ENCODE measurements at regions of chr18 and their contacts with region 1.

Region 1: DNA sequence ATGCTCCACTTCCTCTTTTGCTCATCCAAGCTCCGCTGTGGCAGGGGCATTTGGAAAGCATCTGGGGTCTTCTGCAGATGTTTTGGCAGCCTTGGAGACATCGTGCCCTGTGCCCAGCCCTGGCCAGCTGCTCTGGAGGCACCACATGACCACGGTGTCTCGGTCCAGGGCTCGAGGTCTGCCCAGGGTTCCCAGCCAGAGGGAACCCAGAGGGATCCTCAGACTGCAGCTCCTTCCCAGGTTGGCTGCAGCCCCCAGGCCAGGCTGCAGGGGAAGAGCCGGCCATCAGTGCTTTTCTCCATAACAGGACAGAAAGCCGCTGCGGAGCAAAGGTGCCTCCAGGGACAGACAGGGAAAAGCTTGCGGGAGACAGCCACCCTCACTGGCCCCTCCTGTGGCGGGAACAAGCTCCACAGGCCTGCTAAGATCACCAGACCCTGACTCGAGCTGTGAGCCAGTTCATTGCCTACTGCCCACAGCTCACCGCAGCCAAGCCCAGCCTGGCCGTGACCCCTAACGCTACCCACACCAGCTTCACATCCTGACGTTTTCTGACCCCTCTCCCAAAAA is 74.7 kb downstream of the SMAD7 start:
- DNase-seq: no peak
- H3K4me3 ChIP-seq: no peak overlapping the region
- H3K27ac ChIP-seq: no peak overlapping the region
- H3K4me1 ChIP-seq: peaks cover 13% of the 10 kb centered on the region
- H3K27me3 ChIP-seq: no peaks in the 10 kb centered on the region
- CTCF ChIP-seq: no peak

Region 2: DNA sequence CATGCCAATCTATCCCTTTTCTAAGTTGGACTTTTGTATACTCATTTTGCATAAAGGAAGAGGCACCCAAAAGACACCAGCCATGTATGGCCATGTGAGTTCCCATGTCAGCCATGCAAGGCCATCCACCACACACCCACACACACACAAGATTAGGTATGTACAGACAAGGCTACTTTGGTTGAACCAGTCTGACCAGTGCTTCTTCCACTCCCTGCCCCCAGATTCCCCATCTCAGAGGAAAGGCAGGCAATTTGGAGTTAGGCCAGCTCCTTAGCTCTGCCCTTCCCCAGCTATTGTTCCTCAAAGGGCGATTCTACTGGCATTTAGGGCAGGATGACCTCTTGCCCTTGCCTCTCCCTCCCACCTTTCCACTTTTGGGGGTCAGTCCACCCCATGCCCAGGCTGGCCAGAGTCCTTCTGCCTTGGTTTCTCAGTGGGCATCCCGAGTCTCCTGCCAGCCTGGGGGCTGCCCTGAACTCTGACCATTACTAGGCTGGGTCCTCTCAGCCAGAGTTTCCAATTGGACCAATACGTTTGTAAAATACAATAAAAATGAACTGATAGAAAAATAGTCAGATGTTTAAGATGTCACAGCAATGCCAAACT is 567.9 kb before region 1 on chr18:
- intact Hi-C with region 1: no loop called
- DNase-seq: no peak
- H3K4me3 ChIP-seq: no peak overlapping the region
- H3K27ac ChIP-seq: no peak overlapping the region
- H3K4me1 ChIP-seq: no peaks in the 10 kb centered on the region
- H3K27me3 ChIP-seq: no peaks in the 10 kb centered on the region
- CTCF ChIP-seq: no peak

Region 3: DNA sequence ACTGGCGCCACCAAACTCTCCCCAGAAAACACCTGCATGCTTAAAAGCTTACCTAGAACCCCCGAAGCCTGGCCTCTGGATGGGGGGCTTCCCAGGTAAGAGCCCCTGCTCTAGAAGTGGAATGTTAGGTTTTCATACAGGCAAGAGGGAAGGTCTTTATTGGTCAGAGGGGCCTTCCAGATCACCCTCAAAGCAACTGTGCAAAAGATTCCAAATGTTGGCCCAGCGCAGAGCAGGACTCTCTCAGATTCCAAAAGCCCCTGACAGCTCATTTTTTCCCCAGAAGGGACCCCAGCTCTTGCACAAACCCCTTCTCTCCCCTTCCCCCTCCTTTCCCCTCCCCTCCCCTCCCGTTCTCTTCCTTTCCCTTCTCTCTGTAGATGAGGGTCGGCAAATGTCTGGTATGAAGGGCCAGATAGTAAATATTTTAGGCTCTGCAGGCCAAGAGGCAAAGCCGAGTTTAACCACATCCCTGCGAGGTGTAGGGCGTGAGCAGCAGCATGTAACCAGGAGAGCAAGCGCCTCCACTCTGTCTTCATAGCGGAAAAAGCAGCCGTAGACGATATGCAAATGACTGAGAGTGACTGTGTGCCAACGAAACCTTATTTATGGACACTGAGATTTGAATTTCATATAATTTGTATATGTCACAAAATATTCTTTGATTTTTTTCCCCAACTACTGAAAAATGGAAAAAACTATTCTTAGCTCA is 42.2 kb before region 1 on chr18:
- intact Hi-C with region 1: loop called (anchors 2 kb)
- DNase-seq: no peak
- H3K4me3 ChIP-seq: no peak overlapping the region
- H3K27ac ChIP-seq: peak overlapping the region; percentile 41
- H3K4me1 ChIP-seq: peaks cover 57% of the 10 kb centered on the region
- H3K27me3 ChIP-seq: no peaks in the 10 kb centered on the region
- CTCF ChIP-seq: no peak